ENCODE measurements at regions of chr14 and their contacts with region 1.

Region 1: GRCh38 chr14:52824507-52824906 is 33.1 kb upstream of the GNPNAT1 start:
- DNase-seq: no peak
- ATAC-seq: no peak
- H3K4me3 ChIP-seq: no peak overlapping the region
- H3K27ac ChIP-seq: no peak overlapping the region
- H3K4me1 ChIP-seq: no peaks in the 10 kb centered on the region
- H3K27me3 ChIP-seq: no peaks in the 10 kb centered on the region

Region 2: GRCh38 chr14:52729925-52730667 is 94.4 kb before region 1 on chr14 and contains the start of gene STYX:
- intact Hi-C with region 1: no loop called
- DNase-seq: peak; percentile 99 to 100 (median 100)
- ATAC-seq: peak; percentile 99
- H3K4me3 ChIP-seq: peak within 1 kb of the TSS; percentile 61
- H3K27ac ChIP-seq: peak within 1 kb of the TSS; percentile 84
- H3K4me1 ChIP-seq: no peaks in the 10 kb centered on the region
- H3K27me3 ChIP-seq: no peaks in the 10 kb centered on the region
- total RNA-seq, gene STYX: 12.7 to 13.6 (median 12.9) TPM

Region 3: GRCh38 chr14:52961060-52961639 is 136.6 kb after region 1 on chr14:
- intact Hi-C with region 1: loop called (anchors 2 to 5 kb)
- DNase-seq: peak; percentile 30 to 52 (median 51)
- ATAC-seq: peak; percentile 87 to 92
- H3K4me3 ChIP-seq: no peak overlapping the region
- H3K27ac ChIP-seq: peak overlapping the region; percentile 12
- H3K4me1 ChIP-seq: no peaks in the 10 kb centered on the region
- H3K27me3 ChIP-seq: no peaks in the 10 kb centered on the region

Region 4: DNA sequence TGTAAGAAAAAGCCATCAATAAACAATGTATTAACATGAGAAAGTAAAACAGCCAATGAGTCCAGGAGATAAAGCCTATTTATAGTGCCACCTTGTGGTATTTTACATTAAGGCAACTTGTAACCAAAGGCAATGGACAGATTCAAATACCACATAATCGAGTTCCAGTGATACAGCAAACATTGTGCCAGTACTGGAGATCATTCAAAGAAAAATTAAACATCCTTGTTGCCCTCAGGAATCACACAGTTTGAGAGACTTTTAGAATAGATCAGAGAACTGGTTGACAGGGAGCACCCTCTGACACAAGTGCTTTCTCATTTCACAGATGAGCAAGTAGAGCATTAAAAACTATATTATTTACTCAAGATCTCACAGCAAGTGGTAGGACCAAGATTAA is 230.5 kb after region 1 on chr14:
- intact Hi-C with region 1: loop called (anchors 5 to 10 kb)
- DNase-seq: no peak
- ATAC-seq: peak; percentile 61 to 81
- H3K4me3 ChIP-seq: no peak overlapping the region
- H3K27ac ChIP-seq: no peak overlapping the region
- H3K4me1 ChIP-seq: no peaks in the 10 kb centered on the region
- H3K27me3 ChIP-seq: no peaks in the 10 kb centered on the region

Region 5: GRCh38 chr14:53306267-53306721 is 481.8 kb after region 1 on chr14:
- intact Hi-C with region 1: loop called in 1 of 4 experiments (anchors 10 kb)
- DNase-seq: peak; percentile 45 to 82 (median 62)
- ATAC-seq: peak; percentile 81 to 83
- H3K4me3 ChIP-seq: peak overlapping the region; percentile 76
- H3K27ac ChIP-seq: no peak overlapping the region
- H3K4me1 ChIP-seq: peaks cover 2% of the 10 kb centered on the region
- H3K27me3 ChIP-seq: no peaks in the 10 kb centered on the region

Region 6: GRCh38 chr14:53391151-53391550 is 566.6 kb after region 1 on chr14:
- intact Hi-C with region 1: no loop called
- DNase-seq: no peak
- ATAC-seq: peak in 1 of 2 donors; percentile 35
- H3K4me3 ChIP-seq: no peak overlapping the region
- H3K27ac ChIP-seq: no peak overlapping the region
- H3K4me1 ChIP-seq: no peaks in the 10 kb centered on the region
- H3K27me3 ChIP-seq: no peaks in the 10 kb centered on the region